ENCODE measurements at regions of chr18 and their contacts with region 1.

Region 1: DNA sequence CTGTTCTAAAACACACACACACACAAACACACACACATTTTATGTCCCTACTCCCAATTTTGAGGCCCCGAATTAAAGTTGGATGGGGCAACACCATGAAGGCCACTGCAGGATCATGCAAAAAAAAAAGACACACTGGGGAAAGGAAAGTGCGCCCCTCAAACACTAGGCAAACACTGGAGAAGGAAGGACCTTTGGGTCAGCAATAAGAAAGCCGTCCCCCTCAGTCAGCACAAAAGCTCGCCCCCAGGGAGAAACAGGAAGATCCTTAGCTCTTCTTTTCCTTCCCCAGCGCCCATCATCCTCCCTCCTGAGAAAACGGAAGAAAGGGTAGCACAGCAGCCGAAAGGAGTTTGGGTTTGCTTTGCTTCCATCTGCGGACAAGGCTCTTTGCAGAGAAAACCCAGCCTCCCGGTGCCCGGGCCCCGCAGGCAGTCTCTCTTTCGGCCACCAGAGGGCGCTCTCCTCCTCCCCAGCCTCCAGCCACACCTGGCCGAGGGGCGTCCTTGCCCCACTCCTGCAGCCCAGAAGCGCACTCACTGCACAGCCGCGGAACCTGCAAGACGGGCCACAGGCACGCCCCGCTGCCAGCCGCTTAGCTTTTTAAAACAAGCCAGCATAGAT is 248.5 kb downstream of the CDH20 start:
- DNase-seq: peak; percentile 60 to 89
- H3K4me3 ChIP-seq: peak overlapping the region; percentile 21
- H3K4me1 ChIP-seq: peaks cover 7% of the 10 kb centered on the region; the same call in 1 of the 2 replicates
- H3K27me3 ChIP-seq: no peaks in the 10 kb centered on the region

Region 2: GRCh38 chr18:62131301-62131909 is 549.7 kb after region 1 on chr18:
- in situ Hi-C with region 1: loop called (anchors 25 kb)
- DNase-seq: peak; percentile 65 to 79
- H3K4me3 ChIP-seq: no peak overlapping the region
- H3K4me1 ChIP-seq: no peaks in the 10 kb centered on the region; the same call in 1 of the 2 replicates
- H3K27me3 ChIP-seq: no peaks in the 10 kb centered on the region